ENCODE measurements at regions of chr12 and their contacts with region 1.

Region 1: GRCh38 chr12:71663561-71664294 is at the start of gene ZFC3H1:
- DNase-seq: peak; percentile 92
- H3K4me3 ChIP-seq: peak within 1 kb of the TSS; percentile 87 to 97 (median 92)
- H3K27ac ChIP-seq: peak within 1 kb of the TSS; percentile 99
- H3K4me1 ChIP-seq: peaks cover 9% of the 10 kb centered on the region
- H3K27me3 ChIP-seq: no peaks in the 10 kb centered on the region
- CTCF ChIP-seq: peak; percentile 15 to 51 (median 42)
- polyA plus RNA-seq, gene ZFC3H1: 20.3 to 56.3 TPM (median 39.3 TPM) in 3 replicates

Region 2: DNA sequence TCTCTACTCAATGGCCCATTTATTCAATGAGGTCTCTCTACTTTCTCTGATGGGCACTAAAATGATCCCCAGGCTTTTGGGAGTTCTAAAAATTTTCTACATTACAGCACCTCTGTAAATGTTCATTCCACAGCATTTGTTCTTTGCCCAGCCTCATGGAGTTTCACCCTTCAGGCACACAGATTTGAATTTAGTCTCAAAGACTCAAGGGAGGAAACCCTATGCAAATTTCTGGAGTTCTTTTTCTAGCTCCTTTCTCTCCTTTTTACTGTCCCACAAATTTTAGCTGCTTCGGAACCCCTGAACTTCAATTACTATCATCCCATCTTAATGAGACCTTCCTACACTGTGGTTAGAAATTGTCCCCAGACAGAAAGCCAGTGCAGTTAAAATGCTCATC is 73.5 kb after region 1 on chr12:
- dilution Hi-C with region 1: loop called (anchors 5 kb)
- DNase-seq: no peak
- H3K4me3 ChIP-seq: no peak overlapping the region
- H3K27ac ChIP-seq: no peak overlapping the region
- H3K4me1 ChIP-seq: no peaks in the 10 kb centered on the region
- H3K27me3 ChIP-seq: no peaks in the 10 kb centered on the region
- CTCF ChIP-seq: no peak